CD8-positive, alpha-beta T cell (primary cell): ENCODE measurements at regions of chr3 and their contacts with region 1.

Region 1: GRCh38 chr3:138915503-138916498 is 31.1 kb downstream of the FOXL2 start:
- DNase-seq: peak; percentile 50 to 89 (median 83)
- ATAC-seq: peak; percentile 89
- H3K4me3 ChIP-seq: peak overlapping the region; percentile 74 to 99
- H3K4me3 Mint-ChIP-seq: peak overlapping the region; percentile 85
- H3K27ac ChIP-seq: peak overlapping the region; percentile 15 to 50
- H3K27ac Mint-ChIP-seq: peak overlapping the region; percentile 52
- H3K4me1 ChIP-seq: no peaks in the 10 kb centered on the region
- H3K4me1 Mint-ChIP-seq: peaks cover 5% of the 10 kb centered on the region
- H3K27me3 ChIP-seq: no peaks in the 10 kb centered on the region
- H3K27me3 Mint-ChIP-seq: peaks cover 7% of the 10 kb centered on the region
- CTCF ChIP-seq: peak; percentile 89

Region 2: DNA sequence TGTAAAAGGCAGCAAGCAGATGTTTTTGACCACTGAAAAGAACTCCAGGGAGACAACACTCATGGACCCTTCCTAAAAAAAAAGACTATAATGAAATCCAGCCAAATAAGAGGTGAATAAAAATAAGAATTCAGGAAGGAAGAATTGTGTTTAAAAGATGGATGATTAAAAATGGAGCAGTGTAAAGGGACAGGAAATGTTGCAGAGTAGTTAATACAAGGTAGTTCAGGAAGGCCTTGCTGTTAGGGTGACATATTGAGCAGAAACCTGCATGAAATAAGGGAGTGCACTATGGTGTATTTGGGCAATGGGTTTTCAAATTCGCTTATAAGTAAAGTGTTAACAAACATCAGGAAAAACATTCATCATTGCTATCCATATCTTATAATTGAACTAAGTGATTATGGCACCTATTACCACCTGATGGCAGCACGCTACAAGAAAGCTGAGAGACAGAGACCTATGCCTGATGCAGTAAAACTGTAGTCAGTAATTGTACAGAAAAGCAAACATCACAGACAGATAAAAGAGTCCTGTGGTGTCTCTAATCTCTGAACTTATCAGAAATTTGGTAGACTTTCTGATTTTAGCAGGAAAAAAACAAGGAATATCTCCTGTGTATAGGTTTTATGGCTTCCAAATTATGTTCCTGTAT is 735.3 kb before region 1 on chr3:
- CTCF ChIA-PET with region 1: interaction called, 3 read pairs
- POLR2A ChIA-PET with region 1: no interaction called
- intact Hi-C with region 1: loop called (anchors 5 kb)
- DNase-seq: peak in 5 of 9 experiments; percentile 20 to 64 (median 32)
- ATAC-seq: peak; percentile 91
- H3K4me3 ChIP-seq: no peak overlapping the region
- H3K4me3 Mint-ChIP-seq: no peak overlapping the region
- H3K27ac ChIP-seq: no peak overlapping the region
- H3K27ac Mint-ChIP-seq: no peak overlapping the region
- H3K4me1 ChIP-seq: no peaks in the 10 kb centered on the region
- H3K4me1 Mint-ChIP-seq: no peaks in the 10 kb centered on the region
- H3K27me3 ChIP-seq: peaks cover 0 to 3% of the 10 kb centered on the region in 2 experiments
- H3K27me3 Mint-ChIP-seq: peaks cover 5% of the 10 kb centered on the region
- CTCF ChIP-seq: no peak

Region 3: DNA sequence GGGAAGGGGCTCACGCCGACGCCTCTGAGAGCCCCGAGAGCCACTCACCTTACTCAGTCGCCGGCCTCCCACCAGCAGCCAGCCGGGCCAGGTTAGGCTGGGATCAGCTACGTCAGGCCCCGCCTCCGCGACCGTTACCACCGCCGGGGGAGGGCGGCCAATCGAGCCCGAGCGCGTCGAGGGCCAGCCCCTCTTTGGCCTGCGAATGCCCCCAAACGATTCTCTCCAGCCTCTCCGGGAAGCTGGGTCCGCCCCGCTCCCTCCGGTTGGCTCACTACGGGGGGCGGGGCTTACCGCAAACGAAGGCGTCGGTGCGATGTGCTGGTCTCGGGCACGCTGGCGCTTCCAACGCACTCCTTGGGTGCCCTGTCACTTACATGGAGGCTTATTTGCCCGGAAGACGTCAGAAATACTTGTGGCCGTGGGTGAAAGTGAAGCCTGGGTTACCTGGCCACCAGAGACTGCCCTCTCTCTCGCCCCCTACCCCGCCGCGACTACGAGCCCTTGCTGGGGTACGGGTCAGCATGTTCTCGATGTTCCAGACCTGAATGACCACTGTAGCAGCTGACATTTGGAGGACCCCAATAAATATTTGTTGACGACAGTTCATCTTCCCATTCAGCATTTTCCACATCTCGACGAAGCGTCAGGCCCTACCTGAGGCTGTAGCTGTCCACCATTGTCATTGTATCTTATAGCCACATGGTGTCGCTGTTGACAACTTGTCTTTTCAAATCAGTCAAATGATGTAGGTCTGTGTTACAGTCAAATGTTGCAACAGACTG is 321.5 kb before region 1 on chr3 and contains the start of gene CEP70:
- CTCF ChIA-PET with region 1: interaction called, 214 read pairs
- POLR2A ChIA-PET with region 1: interaction called, 27 read pairs
- intact Hi-C with region 1: loop called (anchors 1 kb)
- DNase-seq: peak; percentile 83 to 96 (median 91)
- ATAC-seq: peak; percentile 93
- H3K4me3 ChIP-seq: peak within 1 kb of the TSS; percentile 83 to 93
- H3K4me3 Mint-ChIP-seq: peak within 1 kb of the TSS; percentile 94
- H3K27ac ChIP-seq: peak within 1 kb of the TSS; percentile 90 to 95
- H3K27ac Mint-ChIP-seq: peak within 1 kb of the TSS; percentile 99
- H3K4me1 ChIP-seq: no peaks in the 10 kb centered on the region
- H3K4me1 Mint-ChIP-seq: peaks cover 14% of the 10 kb centered on the region
- H3K27me3 ChIP-seq: no peaks in the 10 kb centered on the region
- H3K27me3 Mint-ChIP-seq: no peaks in the 10 kb centered on the region
- CTCF ChIP-seq: peak; percentile 86
- total RNA-seq, gene CEP70: 29.5 to 31.0 TPM

Region 4: DNA sequence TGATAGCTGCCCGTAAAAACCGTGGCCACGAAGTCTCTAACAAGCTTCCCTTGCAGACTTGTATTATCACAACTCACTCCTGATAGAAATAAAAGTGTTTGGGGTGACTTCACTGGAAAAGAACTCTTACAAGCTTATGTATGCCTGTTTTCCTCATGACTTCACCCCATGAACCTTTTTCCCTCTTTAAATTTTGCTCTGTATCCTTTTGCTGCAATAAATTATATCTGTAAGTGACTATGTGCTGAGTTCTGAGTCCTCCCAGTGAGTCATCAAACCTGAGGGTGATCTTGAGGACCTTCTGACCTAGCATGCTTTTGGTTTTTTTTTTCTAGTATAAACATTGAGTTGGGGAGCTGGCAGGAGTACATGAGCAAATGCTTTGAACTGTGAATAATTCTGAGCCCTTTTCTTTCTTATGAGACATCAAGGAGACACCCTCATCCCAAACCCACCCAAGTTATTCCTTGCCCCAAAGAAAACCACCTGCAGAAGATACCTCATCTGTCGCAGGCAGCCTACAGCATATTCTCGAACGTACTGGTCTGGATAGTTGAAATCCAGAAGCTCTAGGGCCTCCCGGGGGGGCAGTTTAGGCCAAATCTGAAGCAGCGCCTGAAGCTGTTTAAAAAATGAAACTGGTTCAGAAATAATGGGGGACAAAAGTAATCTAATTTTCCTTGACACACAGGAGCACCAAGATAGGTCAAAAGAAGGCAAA is 221.4 kb before region 1 on chr3:
- CTCF ChIA-PET with region 1: interaction called, 326 read pairs
- POLR2A ChIA-PET with region 1: interaction called, 3 read pairs
- intact Hi-C with region 1: loop called (anchors 1 kb)
- DNase-seq: no peak
- ATAC-seq: no peak
- H3K4me3 ChIP-seq: no peak overlapping the region
- H3K4me3 Mint-ChIP-seq: no peak overlapping the region
- H3K27ac ChIP-seq: no peak overlapping the region
- H3K27ac Mint-ChIP-seq: no peak overlapping the region
- H3K4me1 ChIP-seq: no peaks in the 10 kb centered on the region
- H3K4me1 Mint-ChIP-seq: no peaks in the 10 kb centered on the region
- H3K27me3 ChIP-seq: no peaks in the 10 kb centered on the region
- H3K27me3 Mint-ChIP-seq: no peaks in the 10 kb centered on the region
- CTCF ChIP-seq: no peak

Region 5: GRCh38 chr3:138768125-138768524 is 147.7 kb before region 1 on chr3:
- CTCF ChIA-PET with region 1: interaction called, 15 read pairs
- POLR2A ChIA-PET with region 1: no interaction called
- intact Hi-C with region 1: loop called in 1 of 2 experiments (anchors 10 kb)
- DNase-seq: no peak
- ATAC-seq: no peak
- H3K4me3 ChIP-seq: no peak overlapping the region
- H3K4me3 Mint-ChIP-seq: no peak overlapping the region
- H3K27ac ChIP-seq: no peak overlapping the region
- H3K27ac Mint-ChIP-seq: no peak overlapping the region
- H3K4me1 ChIP-seq: peaks cover 8% of the 10 kb centered on the region
- H3K4me1 Mint-ChIP-seq: peaks cover 13% of the 10 kb centered on the region
- H3K27me3 ChIP-seq: no peaks in the 10 kb centered on the region
- H3K27me3 Mint-ChIP-seq: no peaks in the 10 kb centered on the region
- CTCF ChIP-seq: no peak

Region 6: GRCh38 chr3:138818185-138818860 is 97.5 kb before region 1 on chr3:
- CTCF ChIA-PET with region 1: interaction called, 10 read pairs
- POLR2A ChIA-PET with region 1: no interaction called
- intact Hi-C with region 1: no loop called
- DNase-seq: no peak
- ATAC-seq: no peak
- H3K4me3 ChIP-seq: no peak overlapping the region
- H3K4me3 Mint-ChIP-seq: no peak overlapping the region
- H3K27ac ChIP-seq: no peak overlapping the region
- H3K27ac Mint-ChIP-seq: peak overlapping the region; percentile 23
- H3K4me1 ChIP-seq: peaks cover 10% of the 10 kb centered on the region
- H3K4me1 Mint-ChIP-seq: peaks cover 42% of the 10 kb centered on the region
- H3K27me3 ChIP-seq: no peaks in the 10 kb centered on the region
- H3K27me3 Mint-ChIP-seq: no peaks in the 10 kb centered on the region
- CTCF ChIP-seq: no peak

Region 7: GRCh38 chr3:138898301-138898700 is 17.5 kb before region 1 on chr3:
- CTCF ChIA-PET with region 1: interaction called, 36 read pairs
- POLR2A ChIA-PET with region 1: interaction called, 3 read pairs
- intact Hi-C with region 1: no loop called
- DNase-seq: no peak
- ATAC-seq: no peak
- H3K4me3 ChIP-seq: no peak overlapping the region
- H3K4me3 Mint-ChIP-seq: no peak overlapping the region
- H3K27ac ChIP-seq: no peak overlapping the region
- H3K27ac Mint-ChIP-seq: no peak overlapping the region
- H3K4me1 ChIP-seq: no peaks in the 10 kb centered on the region
- H3K4me1 Mint-ChIP-seq: no peaks in the 10 kb centered on the region
- H3K27me3 ChIP-seq: no peaks in the 10 kb centered on the region
- H3K27me3 Mint-ChIP-seq: no peaks in the 10 kb centered on the region
- CTCF ChIP-seq: no peak